Mammary epithelial cell (primary cell): ENCODE measurements at regions of chr17 and their contacts with region 1.

Region 1: DNA sequence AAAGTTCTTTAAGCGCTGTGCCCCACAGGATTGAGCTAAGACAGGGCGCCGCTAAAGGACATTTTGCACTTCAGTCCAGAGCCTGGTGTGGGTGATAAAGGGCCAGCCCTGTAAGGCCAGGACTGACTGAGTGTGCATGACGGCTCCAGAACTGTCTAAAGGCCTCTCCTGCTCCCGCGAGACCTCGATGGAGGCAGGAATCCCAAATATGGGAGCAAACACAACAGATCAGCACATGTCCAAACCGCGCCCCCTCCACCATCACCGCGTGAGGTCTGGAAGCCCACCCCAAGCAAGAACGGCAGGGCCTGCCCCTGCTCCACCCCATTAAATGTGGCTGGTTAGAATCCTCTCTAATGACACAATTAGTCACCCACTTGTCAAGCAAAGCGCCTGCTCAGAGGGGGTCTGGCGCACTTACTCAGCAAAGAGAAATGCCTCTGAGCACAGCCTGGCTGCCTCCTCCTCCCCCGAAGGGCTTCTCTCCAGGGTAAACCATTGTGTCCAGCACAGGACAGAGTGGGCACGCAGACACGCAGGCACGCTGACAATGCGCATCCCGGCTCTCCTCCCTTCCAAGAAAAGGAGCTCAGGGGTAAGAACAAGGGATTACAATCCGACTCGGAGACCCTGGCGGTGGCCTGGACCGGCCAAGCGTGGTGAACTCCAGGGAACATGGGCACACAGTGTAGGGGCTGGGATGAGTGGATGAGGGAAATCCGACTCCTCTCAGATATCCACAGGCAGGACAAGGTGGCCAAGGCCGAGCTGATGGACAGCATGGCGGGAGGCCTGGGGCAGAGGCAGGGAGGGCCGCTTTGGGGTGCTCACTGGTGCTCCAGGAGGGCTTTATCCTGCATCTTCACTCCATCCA is 1.5 kb downstream of the MXRA7 start:
- DNase-seq: peak; percentile 80
- H3K4me3 ChIP-seq: peak overlapping the region; percentile 65 to 68 (median 67)
- H3K27ac ChIP-seq: peak overlapping the region; percentile 40
- H3K4me1 ChIP-seq: peaks cover 27% of the 10 kb centered on the region
- H3K27me3 ChIP-seq: no peaks in the 10 kb centered on the region
- CTCF ChIP-seq: no peak

Region 2: DNA sequence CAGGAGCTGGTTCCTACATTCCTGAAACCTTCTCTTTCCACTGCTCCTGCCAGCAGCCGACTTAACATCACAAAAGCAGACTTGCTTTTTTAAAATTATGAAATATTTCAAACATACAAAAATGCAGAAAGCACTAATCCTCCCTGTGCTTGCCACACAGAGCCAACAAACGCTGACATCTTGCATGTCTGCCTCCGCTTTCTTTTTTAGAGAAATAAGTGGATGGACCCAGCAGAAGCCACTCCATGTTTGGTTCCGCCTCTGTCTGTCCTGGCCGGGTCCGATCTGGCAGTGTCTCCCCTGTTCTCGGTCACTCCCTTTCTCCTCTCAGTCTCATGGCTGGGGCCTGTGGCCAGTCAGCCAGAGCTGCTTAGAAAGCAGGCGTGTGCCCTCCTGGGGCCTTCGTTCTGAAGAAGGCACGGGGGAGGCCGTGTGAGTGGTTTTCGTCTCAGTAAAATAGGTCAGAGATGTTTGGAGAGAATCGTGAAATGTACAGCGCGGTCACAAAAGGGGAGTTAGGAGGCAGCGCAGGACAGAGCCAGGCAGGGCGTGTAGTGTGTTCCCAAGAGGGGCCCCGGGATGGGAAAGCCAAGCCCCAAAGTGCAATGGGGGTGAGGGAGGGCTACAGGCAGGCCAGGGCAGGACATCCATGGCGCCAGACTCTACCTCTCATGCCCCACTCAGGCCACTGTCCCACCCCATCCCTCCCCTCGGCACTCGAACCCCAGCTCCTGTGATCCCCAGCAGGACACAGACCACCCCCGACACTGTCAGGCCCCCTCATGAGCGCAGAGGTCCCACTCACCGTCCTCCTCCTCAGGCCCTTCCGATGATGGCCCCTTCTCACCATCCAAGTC is 21.8 kb before region 1 on chr17:
- CTCF ChIA-PET with region 1: no interaction called
- dilution Hi-C with region 1: no loop called
- in situ Hi-C with region 1: no loop called
- intact Hi-C with region 1: loop called (anchors 2 kb)
- DNase-seq: no peak
- H3K4me3 ChIP-seq: no peak overlapping the region
- H3K27ac ChIP-seq: no peak overlapping the region
- H3K4me1 ChIP-seq: no peaks in the 10 kb centered on the region
- H3K27me3 ChIP-seq: no peaks in the 10 kb centered on the region
- CTCF ChIP-seq: no peak